ENCODE measurements at regions of chr7 and their contacts with region 1.

Region 1: GRCh38 chr7:35424869-35425495 is 171.1 kb upstream of the TBX20 start:
- DNase-seq: peak; percentile 80
- H3K4me3 ChIP-seq: no peak overlapping the region
- H3K27ac ChIP-seq: no peak overlapping the region
- H3K4me1 ChIP-seq: no peaks in the 10 kb centered on the region
- H3K27me3 ChIP-seq: no peaks in the 10 kb centered on the region
- CTCF ChIP-seq: peak; percentile 92
- EP300 ChIP-seq: no peak
- RAD21 ChIP-seq: peak; percentile 87

Region 2: DNA sequence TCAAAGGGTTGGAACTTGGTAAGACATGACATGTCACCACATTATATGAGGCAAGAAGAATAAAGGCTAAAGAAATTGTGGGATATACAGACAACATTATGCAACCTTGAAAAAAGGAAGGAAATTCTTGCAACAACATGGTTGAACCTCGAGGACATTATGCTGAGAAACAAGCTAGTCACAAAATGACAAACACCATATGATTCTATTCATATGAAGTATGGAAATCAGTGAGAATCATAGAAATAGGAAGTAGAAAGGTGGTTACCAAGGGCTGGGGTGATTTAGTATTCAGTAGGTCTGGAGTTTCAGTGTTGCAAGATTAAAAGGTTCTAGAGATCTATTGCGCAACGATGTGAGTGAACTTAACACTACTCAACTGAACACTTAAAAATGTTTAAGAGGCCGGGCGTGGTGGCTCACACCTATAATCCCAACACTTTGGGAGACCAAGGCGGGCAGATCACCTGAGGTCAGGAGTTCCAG is 44.2 kb before region 1 on chr7:
- CTCF ChIA-PET with region 1: interaction called, 11 read pairs
- POLR2A ChIA-PET with region 1: no interaction called
- DNase-seq: no peak
- H3K4me3 ChIP-seq: no peak overlapping the region
- H3K27ac ChIP-seq: no peak overlapping the region
- H3K4me1 ChIP-seq: peaks cover 0 to 8% of the 10 kb centered on the region in 2 experiments; a peak in 1 of 4 replicates
- H3K27me3 ChIP-seq: peaks cover 6% of the 10 kb centered on the region; the same call in 1 of the 2 replicates
- CTCF ChIP-seq: no peak
- EP300 ChIP-seq: no peak
- RAD21 ChIP-seq: no peak

Region 3: GRCh38 chr7:35401217-35401879 is 23.6 kb before region 1 on chr7:
- CTCF ChIA-PET with region 1: interaction called, 14 read pairs
- POLR2A ChIA-PET with region 1: no interaction called
- DNase-seq: no peak
- H3K4me3 ChIP-seq: no peak overlapping the region
- H3K27ac ChIP-seq: no peak overlapping the region
- H3K4me1 ChIP-seq: no peaks in the 10 kb centered on the region
- H3K27me3 ChIP-seq: no peaks in the 10 kb centered on the region; the same call in 1 of the 2 replicates
- CTCF ChIP-seq: no peak
- EP300 ChIP-seq: no peak
- RAD21 ChIP-seq: no peak

Region 4: GRCh38 chr7:35437619-35438275 is 12.8 kb after region 1 on chr7:
- CTCF ChIA-PET with region 1: interaction called, 47 read pairs
- POLR2A ChIA-PET with region 1: no interaction called
- DNase-seq: no peak
- H3K4me3 ChIP-seq: no peak overlapping the region
- H3K27ac ChIP-seq: peak overlapping the region in 1 of 2 experiments; percentile 94; a peak in 2 of 4 replicates
- H3K4me1 ChIP-seq: peaks cover 0 to 17% of the 10 kb centered on the region in 2 experiments; a peak in 2 of 4 replicates
- H3K27me3 ChIP-seq: no peaks in the 10 kb centered on the region
- CTCF ChIP-seq: no peak
- EP300 ChIP-seq: no peak
- RAD21 ChIP-seq: no peak

Region 5: GRCh38 chr7:35537067-35538023 is 112.4 kb after region 1 on chr7:
- CTCF ChIA-PET with region 1: interaction called, 16 read pairs
- POLR2A ChIA-PET with region 1: no interaction called
- DNase-seq: peak; percentile 92
- H3K4me3 ChIP-seq: peak overlapping the region; percentile 37 to 65
- H3K27ac ChIP-seq: no peak overlapping the region
- H3K4me1 ChIP-seq: peaks cover 0 to 2% of the 10 kb centered on the region in 2 experiments; a peak in 1 of 4 replicates
- H3K27me3 ChIP-seq: peaks cover 13% of the 10 kb centered on the region
- CTCF ChIP-seq: peak; percentile 99
- EP300 ChIP-seq: no peak
- RAD21 ChIP-seq: peak; percentile 98